ENCODE measurements at regions of chr5 and their contacts with region 1.

Region 1: DNA sequence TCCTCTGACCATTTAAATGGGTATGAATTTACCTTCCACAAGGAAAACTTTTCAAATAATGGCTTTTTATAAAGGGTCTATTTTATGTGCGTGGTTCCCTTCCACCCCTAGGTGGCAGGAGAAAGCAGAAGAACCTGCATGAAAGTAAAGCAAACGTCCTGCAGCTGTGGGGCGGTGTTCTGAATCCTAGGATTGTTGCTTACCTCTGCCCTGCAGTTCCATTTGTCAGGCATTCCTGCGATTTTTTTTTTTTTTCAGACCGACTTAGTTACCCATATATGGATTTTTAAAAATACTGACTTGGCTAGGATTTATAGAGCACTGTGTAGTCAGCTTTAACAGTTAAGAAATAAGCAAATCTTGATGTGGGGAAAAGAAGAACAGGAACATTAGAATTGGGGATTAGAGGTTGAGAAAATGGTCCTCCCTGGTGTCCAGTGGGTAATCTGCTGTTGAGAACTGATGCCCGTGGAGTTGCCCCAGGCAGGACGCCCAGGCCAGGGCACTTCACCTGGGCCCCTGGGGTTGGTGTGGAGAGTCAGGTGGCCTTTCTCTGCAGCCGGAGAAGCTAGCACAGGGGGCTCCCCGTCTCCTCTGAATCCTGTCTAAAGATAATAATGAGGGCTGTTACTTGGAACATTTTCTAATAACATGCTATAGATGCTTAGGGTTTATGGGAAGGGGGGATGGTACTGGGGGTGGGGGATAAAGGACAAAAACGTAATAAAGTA is 30.4 kb upstream of the LTC4S start:
- DNase-seq: no peak
- ATAC-seq: peak; percentile 87
- H3K4me3 ChIP-seq: no peak overlapping the region
- H3K27ac ChIP-seq: no peak overlapping the region
- H3K4me1 ChIP-seq: peaks cover 30% of the 10 kb centered on the region
- H3K27me3 ChIP-seq: no peaks in the 10 kb centered on the region
- CTCF ChIP-seq: peak; percentile 82 to 94 (median 90)
- EP300 ChIP-seq: no peak
- POLR2A ChIP-seq: no peak
- RAD21 ChIP-seq: peak; percentile 79

Region 2: DNA sequence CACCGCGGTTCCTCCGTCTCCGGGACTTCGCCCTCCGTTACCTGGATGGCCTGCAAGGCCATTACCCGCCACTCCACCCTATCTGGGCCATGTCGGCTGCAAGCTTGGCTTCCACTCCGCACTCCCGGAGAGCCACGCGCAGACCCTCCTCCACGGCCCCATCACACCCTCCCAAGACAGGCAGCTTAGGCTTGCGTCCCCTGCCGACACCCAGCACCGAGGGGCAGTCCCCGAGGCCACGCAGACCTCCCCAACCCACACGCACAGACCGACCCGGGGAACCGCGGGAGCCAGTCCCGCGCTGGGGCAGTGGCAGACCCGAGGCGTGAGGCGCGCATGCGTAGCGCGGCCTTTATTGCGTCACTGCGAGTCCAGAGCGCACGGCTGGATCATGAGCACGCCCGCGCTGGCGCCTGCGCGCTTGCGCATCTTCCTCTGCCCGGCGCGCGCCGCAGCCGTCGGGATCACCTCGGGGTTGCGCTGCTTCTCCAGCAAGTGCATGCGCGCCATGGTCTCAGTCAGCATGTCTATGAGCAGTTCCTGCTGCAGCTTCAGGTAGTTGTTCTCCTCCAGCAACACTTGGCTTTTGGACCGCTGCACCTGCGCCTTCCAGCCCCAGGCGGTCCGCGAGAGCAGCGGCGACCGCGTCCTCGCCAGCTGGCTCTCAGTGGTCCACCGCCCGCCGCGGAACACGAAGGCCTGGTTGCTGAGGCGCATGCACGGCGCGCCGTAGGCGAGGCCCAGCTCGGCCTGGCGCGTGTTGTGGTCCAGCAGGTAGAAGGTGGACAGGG is 85.0 kb before region 1 on chr5:
- CTCF ChIA-PET with region 1: interaction called, 21 read pairs
- POLR2A ChIA-PET with region 1: no interaction called
- RAD21 ChIA-PET with region 1: no interaction called
- SMC1A ChIA-PET with region 1: interaction called, 3 read pairs
- in situ Hi-C with region 1: no loop called
- intact Hi-C with region 1: no loop called
- DNase-seq: peak; percentile 86
- ATAC-seq: peak; percentile 92
- H3K4me3 ChIP-seq: peak overlapping the region; percentile 76
- H3K27ac ChIP-seq: peak overlapping the region; percentile 94
- H3K4me1 ChIP-seq: peaks cover 11% of the 10 kb centered on the region
- H3K27me3 ChIP-seq: no peaks in the 10 kb centered on the region
- CTCF ChIP-seq: peak in 1 of 3 experiments; percentile 21; a peak in 1 of 6 replicates
- EP300 ChIP-seq: no peak
- POLR2A ChIP-seq: peak; percentile 99
- RAD21 ChIP-seq: no peak

Region 3: DNA sequence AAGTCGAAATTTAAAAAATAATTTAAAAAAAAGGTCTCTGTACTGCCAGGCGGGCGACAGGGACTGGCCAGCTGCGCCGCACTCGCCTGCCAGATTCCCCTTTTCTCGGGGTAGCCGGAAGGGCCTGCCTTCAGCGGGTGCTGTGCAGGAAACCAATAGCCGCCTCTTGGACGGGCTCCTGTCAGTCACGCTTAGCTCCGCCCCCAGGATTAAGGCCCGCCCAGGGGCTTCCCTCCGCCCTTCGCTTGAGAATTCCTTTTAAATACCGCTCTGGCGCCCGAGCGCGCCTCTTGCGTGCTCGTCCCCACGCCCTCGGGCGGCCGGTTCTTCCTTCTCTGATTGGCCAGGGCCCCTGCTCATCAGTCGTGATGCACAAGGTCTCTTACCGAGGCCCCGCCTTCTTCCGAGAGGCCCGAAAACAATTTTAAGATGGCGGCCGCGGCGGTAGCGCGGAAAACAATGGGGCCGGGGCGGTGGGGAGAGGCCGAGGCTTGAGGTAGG is 30.9 kb before region 1 on chr5 and contains the start of gene MAML1:
- CTCF ChIA-PET with region 1: interaction called, 25 read pairs
- POLR2A ChIA-PET with region 1: interaction called, 6 read pairs
- RAD21 ChIA-PET with region 1: interaction called, 7 read pairs
- SMC1A ChIA-PET with region 1: interaction called, 5 read pairs
- in situ Hi-C with region 1: no loop called
- intact Hi-C with region 1: no loop called
- DNase-seq: peak; percentile 98
- ATAC-seq: peak; percentile 97
- H3K4me3 ChIP-seq: peak within 1 kb of the TSS; percentile 84
- H3K27ac ChIP-seq: peak within 1 kb of the TSS; percentile 83
- H3K4me1 ChIP-seq: peaks cover 6% of the 10 kb centered on the region; the same call in 1 of the 2 replicates
- H3K27me3 ChIP-seq: no peaks in the 10 kb centered on the region
- CTCF ChIP-seq: no peak
- EP300 ChIP-seq: no peak
- POLR2A ChIP-seq: peak; percentile 83
- RAD21 ChIP-seq: no peak
- polyA plus RNA-seq, gene MAML1: 0.42 to 1.2 TPM

Region 4: GRCh38 chr5:179777909-179778308 is 14.5 kb after region 1 on chr5:
- CTCF ChIA-PET with region 1: interaction called, 18 read pairs
- POLR2A ChIA-PET with region 1: no interaction called
- RAD21 ChIA-PET with region 1: no interaction called
- SMC1A ChIA-PET with region 1: interaction called, 4 read pairs
- in situ Hi-C with region 1: no loop called
- intact Hi-C with region 1: no loop called
- DNase-seq: no peak
- ATAC-seq: no peak
- H3K4me3 ChIP-seq: no peak overlapping the region
- H3K27ac ChIP-seq: no peak overlapping the region
- H3K4me1 ChIP-seq: no peaks in the 10 kb centered on the region
- H3K27me3 ChIP-seq: no peaks in the 10 kb centered on the region
- CTCF ChIP-seq: no peak
- EP300 ChIP-seq: no peak
- POLR2A ChIP-seq: no peak
- RAD21 ChIP-seq: no peak

Region 5: GRCh38 chr5:179930788-179931473 is 167.6 kb after region 1 on chr5:
- CTCF ChIA-PET with region 1: no interaction called
- POLR2A ChIA-PET with region 1: no interaction called
- RAD21 ChIA-PET with region 1: no interaction called
- SMC1A ChIA-PET with region 1: no interaction called
- in situ Hi-C with region 1: no loop called
- intact Hi-C with region 1: no loop called
- DNase-seq: no peak
- ATAC-seq: no peak
- H3K4me3 ChIP-seq: no peak overlapping the region
- H3K27ac ChIP-seq: no peak overlapping the region
- H3K4me1 ChIP-seq: no peaks in the 10 kb centered on the region
- H3K27me3 ChIP-seq: no peaks in the 10 kb centered on the region
- CTCF ChIP-seq: no peak
- EP300 ChIP-seq: no peak
- POLR2A ChIP-seq: no peak
- RAD21 ChIP-seq: no peak

Region 6: DNA sequence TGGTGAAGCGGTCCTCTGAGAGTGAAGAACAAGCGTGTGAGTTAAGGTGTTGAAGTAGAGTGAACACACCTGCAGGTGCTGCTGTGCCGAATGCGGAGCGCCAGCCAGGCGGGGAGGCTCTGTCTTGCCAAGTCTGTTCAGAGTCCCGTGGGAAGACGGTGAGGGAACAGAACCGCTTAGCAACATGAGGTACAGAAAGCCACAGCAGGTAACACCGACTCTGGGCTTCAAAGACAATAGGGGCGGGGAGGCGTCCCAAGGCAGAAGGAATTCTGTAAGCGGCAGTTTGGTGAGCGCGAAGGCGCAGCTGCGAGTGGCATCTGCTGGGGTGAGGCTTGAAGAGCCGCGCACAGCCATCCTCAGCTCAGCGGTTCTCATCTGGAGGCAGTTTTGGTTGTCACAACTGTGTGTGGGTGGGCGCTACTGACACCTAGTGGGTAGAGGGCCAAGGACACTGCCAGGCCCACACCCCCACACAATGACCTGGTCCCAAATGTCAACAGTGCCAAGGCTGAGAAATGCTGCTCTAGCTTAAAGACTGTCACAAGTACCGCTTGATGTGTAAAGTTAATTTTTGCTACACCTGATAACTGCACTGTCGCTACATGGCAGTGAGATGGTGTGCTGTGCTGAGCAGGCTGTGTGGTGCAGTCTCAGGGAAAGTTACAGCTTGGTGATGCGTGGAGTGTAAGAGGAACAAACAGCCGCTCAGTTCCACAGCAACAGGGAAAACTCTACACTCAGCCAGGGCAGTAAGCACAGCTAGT is 211.7 kb after region 1 on chr5:
- CTCF ChIA-PET with region 1: interaction called, 11 read pairs
- POLR2A ChIA-PET with region 1: no interaction called
- RAD21 ChIA-PET with region 1: interaction called, 3 read pairs
- SMC1A ChIA-PET with region 1: no interaction called
- in situ Hi-C with region 1: no loop called
- intact Hi-C with region 1: loop called (anchors 10 kb)
- DNase-seq: no peak
- ATAC-seq: peak; percentile 96
- H3K4me3 ChIP-seq: no peak overlapping the region
- H3K27ac ChIP-seq: no peak overlapping the region
- H3K4me1 ChIP-seq: peaks cover 4% of the 10 kb centered on the region; the same call in 1 of the 2 replicates
- H3K27me3 ChIP-seq: no peaks in the 10 kb centered on the region
- CTCF ChIP-seq: peak; percentile 55 to 77 (median 68)
- EP300 ChIP-seq: no peak
- POLR2A ChIP-seq: no peak
- RAD21 ChIP-seq: peak; percentile 48

Region 7: DNA sequence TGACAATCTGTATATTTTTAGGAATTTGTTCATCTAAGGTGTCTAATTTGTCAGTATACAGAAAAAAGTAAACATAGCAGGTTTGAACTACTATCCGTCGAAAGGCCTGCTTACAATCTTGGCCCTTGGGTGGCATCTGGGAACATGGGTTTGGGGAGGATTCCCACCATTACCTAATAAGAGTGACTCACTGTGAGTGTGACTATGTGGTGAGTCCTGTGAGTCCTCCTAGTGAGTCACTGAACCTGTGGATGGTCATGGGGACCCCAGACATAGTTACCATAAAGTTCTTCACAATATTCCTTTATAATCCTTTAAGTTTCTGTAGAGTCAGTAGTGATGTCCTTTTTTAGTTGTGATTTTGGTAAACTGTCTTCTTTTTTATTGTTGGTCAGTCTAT is 271.2 kb after region 1 on chr5:
- CTCF ChIA-PET with region 1: no interaction called
- POLR2A ChIA-PET with region 1: no interaction called
- RAD21 ChIA-PET with region 1: no interaction called
- SMC1A ChIA-PET with region 1: no interaction called
- in situ Hi-C with region 1: no loop called
- intact Hi-C with region 1: no loop called
- DNase-seq: no peak
- ATAC-seq: no peak
- H3K4me3 ChIP-seq: no peak overlapping the region
- H3K27ac ChIP-seq: no peak overlapping the region
- H3K4me1 ChIP-seq: no peaks in the 10 kb centered on the region
- H3K27me3 ChIP-seq: no peaks in the 10 kb centered on the region
- CTCF ChIP-seq: no peak
- EP300 ChIP-seq: no peak
- POLR2A ChIP-seq: no peak
- RAD21 ChIP-seq: no peak

Region 8: DNA sequence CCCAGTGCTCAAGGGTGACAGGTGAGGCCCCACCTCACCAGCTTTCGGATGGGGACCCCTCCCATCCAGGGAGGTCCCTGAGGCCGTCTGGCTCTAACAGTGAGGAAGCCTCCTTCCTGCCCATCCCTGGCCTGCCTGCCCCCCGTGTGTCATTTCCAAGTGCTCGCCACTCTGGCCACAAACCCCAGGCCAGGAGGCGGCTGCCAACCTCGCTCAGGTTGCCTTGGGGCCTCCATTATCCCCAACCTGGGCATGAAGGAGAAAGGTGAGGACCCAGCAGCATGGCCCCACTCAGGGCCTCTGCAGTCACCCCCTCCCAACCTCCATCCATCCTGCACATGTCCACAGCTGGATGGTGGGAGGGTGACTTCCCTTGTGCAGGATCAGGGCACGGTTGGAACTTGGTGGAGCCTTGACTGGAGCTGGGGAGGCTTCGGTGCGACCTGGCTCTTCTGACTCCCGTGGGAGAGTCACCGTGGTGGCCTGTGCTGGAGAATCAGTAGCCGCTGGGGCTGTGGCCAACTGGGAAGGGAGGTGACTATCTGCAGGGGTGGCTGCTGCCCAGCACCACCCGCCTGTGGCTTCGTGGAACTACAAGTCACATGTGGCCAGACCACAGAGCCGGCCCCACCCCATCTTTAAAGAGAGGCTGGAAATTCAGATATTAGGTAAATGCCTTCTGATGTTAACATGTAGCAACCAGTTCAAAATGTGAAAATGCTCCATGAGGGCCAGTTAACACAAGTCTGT is 627.2 kb after region 1 on chr5:
- CTCF ChIA-PET with region 1: no interaction called
- POLR2A ChIA-PET with region 1: no interaction called
- RAD21 ChIA-PET with region 1: no interaction called
- SMC1A ChIA-PET with region 1: no interaction called
- in situ Hi-C with region 1: no loop called
- intact Hi-C with region 1: no loop called
- DNase-seq: no peak
- ATAC-seq: no peak
- H3K4me3 ChIP-seq: no peak overlapping the region
- H3K27ac ChIP-seq: no peak overlapping the region
- H3K4me1 ChIP-seq: no peaks in the 10 kb centered on the region
- H3K27me3 ChIP-seq: no peaks in the 10 kb centered on the region
- CTCF ChIP-seq: no peak
- EP300 ChIP-seq: no peak
- POLR2A ChIP-seq: no peak
- RAD21 ChIP-seq: no peak